Heart right ventricle (tissue), 16 donors: ENCODE measurements at regions of chr15 and their contacts with region 1.

Region 1: DNA sequence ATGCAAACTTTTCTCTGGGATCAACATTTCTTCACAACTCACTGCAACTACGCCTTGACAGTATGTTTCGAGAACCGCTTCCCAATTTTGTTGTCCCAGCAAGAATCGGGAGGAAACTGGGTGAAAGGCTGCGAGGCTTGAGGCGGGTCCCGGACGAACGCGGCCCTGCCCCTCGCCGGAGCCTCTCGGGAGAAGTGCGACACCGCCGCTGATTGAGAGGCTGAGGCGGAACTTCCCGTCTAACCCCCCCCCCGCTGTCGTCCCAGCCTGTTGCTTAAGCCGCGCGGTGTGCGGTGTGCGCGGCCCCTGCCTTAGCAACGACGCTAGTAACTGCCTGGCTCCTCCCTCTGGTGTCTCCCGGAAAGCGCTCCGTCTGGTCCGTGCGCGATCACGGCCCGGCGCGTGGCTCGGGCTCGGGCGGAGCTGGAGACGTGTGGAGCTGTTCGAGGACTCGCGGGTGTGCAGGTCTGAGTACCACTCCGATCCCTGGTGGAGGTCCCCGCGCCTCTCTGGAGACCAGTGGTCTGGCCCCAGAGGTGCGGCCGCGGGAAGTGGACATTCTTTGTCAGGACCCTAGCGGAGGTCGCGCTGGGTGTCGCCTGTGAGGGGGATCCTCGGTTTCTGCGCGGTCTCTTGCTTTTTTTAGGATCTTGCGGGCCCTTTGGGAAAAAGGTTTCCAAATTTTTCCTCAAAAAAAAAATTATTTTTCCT is at the starts of genes DTWD1 and FAM227B:
- DNase-seq: peak; percentile 96 to 98
- ATAC-seq: peak; percentile 99 to 100 (median 100)
- H3K4me3 ChIP-seq: peak within 1 kb of the TSS; percentile 67 to 92 (median 80)
- H3K27ac ChIP-seq: peak within 1 kb of the TSS; percentile 83 to 96 (median 94)
- H3K4me1 ChIP-seq: peaks cover 0 to 34% (median 21%) of the 10 kb centered on the region in 9 donors
- H3K27me3 ChIP-seq: no peaks in the 10 kb centered on the region
- CTCF ChIP-seq: peak in 1 of 9 donors; percentile 12
- total RNA-seq, gene DTWD1: 14.8 to 23.2 (median 17.7) TPM
- total RNA-seq, gene FAM227B: 10.3 to 22.8 (median 14.6) TPM

Region 2: GRCh38 chr15:48877630-48878595 is 742.9 kb before region 1 on chr15 and contains the start of gene EID1:
- intact Hi-C with region 1: loop called in 2 of 10 experiments (anchors 10 kb)
- DNase-seq: peak; percentile 92 to 94
- ATAC-seq: peak; percentile 99 to 100 (median 100)
- H3K4me3 ChIP-seq: peak within 1 kb of the TSS; percentile 45 to 89 (median 77)
- H3K27ac ChIP-seq: peak within 1 kb of the TSS; percentile 46 to 95 (median 88)
- H3K4me1 ChIP-seq: peaks cover 0 to 28% (median 19%) of the 10 kb centered on the region in 9 donors
- H3K27me3 ChIP-seq: peaks cover 0 to 5% (median 0%) of the 10 kb centered on the region in 7 donors
- CTCF ChIP-seq: peak in 2 of 9 donors; percentile 9 to 12
- total RNA-seq, gene EID1: 174 to 255 (median 225) TPM

Region 3: GRCh38 chr15:49235446-49236124 is 385.2 kb before region 1 on chr15:
- intact Hi-C with region 1: loop called in 2 of 10 experiments (anchors 10 kb)
- DNase-seq: peak in 1 of 2 donors; percentile 46
- ATAC-seq: peak; percentile 64 to 85 (median 80)
- H3K4me3 ChIP-seq: no peak overlapping the region
- H3K27ac ChIP-seq: peak overlapping the region in 3 of 10 donors; percentile 3 to 52 (median 23)
- H3K4me1 ChIP-seq: peaks cover 0 to 52% (median 21%) of the 10 kb centered on the region in 9 donors
- H3K27me3 ChIP-seq: no peaks in the 10 kb centered on the region
- CTCF ChIP-seq: peak; percentile 46 to 82 (median 78)

Region 4: GRCh38 chr15:49428409-49429095 is 192.3 kb before region 1 on chr15:
- intact Hi-C with region 1: loop called in 4 of 10 experiments (anchors 5 to 10 kb)
- DNase-seq: peak; percentile 29 to 71
- ATAC-seq: peak; percentile 79 to 97 (median 95)
- H3K4me3 ChIP-seq: peak overlapping the region in 8 of 10 donors; percentile 19 to 56 (median 24)
- H3K27ac ChIP-seq: peak overlapping the region; percentile 15 to 81 (median 72)
- H3K4me1 ChIP-seq: peaks cover 0 to 25% (median 8%) of the 10 kb centered on the region in 9 donors
- H3K27me3 ChIP-seq: no peaks in the 10 kb centered on the region
- CTCF ChIP-seq: no peak

Region 5: GRCh38 chr15:49876401-49877038 is 255.7 kb after region 1 on chr15:
- intact Hi-C with region 1: loop called in 1 of 10 experiments (anchors 5 kb)
- DNase-seq: peak in 1 of 2 donors; percentile 29
- ATAC-seq: peak; percentile 44 to 88 (median 80)
- H3K4me3 ChIP-seq: peak overlapping the region in 1 of 10 donors; percentile 2
- H3K27ac ChIP-seq: peak overlapping the region; percentile 54 to 81 (median 73)
- H3K4me1 ChIP-seq: peaks cover 0 to 29% (median 12%) of the 10 kb centered on the region in 9 donors
- H3K27me3 ChIP-seq: no peaks in the 10 kb centered on the region
- CTCF ChIP-seq: peak in 8 of 9 donors; percentile 38 to 53 (median 44)

Region 6: GRCh38 chr15:49989498-49989897 is 368.7 kb after region 1 on chr15:
- intact Hi-C with region 1: loop called in 1 of 10 experiments (anchors 10 kb)
- DNase-seq: no peak
- ATAC-seq: peak in 7 of 8 donors; percentile 62 to 87 (median 78)
- H3K4me3 ChIP-seq: no peak overlapping the region
- H3K27ac ChIP-seq: peak overlapping the region in 9 of 10 donors; percentile 22 to 69 (median 55)
- H3K4me1 ChIP-seq: peaks cover 0 to 61% (median 25%) of the 10 kb centered on the region in 9 donors
- H3K27me3 ChIP-seq: no peaks in the 10 kb centered on the region
- CTCF ChIP-seq: no peak

Region 7: DNA sequence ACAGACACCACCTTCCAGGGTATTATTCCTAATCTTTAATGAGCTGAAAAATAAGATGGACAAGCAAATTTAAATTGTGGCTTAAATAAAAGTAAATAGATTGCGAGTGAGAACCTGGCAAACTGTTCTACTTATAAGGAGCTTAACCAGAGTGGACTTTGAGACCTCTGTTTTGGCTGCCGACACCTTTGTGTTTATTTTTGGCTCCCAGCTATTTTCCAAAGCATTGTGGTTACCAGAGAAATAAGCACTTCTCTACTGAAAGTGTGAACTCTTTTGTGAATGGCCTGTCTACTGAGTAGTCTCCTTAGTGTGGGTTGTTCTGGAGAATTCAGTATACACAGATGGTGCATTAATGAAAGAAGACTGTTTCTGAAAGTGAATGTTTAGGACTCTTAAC is 388.8 kb after region 1 on chr15:
- intact Hi-C with region 1: loop called in 2 of 10 experiments (anchors 5 to 10 kb)
- DNase-seq: no peak
- ATAC-seq: peak in 2 of 8 donors; percentile 56 to 59
- H3K4me3 ChIP-seq: no peak overlapping the region
- H3K27ac ChIP-seq: no peak overlapping the region
- H3K4me1 ChIP-seq: no peaks in the 10 kb centered on the region
- H3K27me3 ChIP-seq: no peaks in the 10 kb centered on the region
- CTCF ChIP-seq: no peak